ENCODE measurements at regions of chr17 and their contacts with region 1.

Region 1: DNA sequence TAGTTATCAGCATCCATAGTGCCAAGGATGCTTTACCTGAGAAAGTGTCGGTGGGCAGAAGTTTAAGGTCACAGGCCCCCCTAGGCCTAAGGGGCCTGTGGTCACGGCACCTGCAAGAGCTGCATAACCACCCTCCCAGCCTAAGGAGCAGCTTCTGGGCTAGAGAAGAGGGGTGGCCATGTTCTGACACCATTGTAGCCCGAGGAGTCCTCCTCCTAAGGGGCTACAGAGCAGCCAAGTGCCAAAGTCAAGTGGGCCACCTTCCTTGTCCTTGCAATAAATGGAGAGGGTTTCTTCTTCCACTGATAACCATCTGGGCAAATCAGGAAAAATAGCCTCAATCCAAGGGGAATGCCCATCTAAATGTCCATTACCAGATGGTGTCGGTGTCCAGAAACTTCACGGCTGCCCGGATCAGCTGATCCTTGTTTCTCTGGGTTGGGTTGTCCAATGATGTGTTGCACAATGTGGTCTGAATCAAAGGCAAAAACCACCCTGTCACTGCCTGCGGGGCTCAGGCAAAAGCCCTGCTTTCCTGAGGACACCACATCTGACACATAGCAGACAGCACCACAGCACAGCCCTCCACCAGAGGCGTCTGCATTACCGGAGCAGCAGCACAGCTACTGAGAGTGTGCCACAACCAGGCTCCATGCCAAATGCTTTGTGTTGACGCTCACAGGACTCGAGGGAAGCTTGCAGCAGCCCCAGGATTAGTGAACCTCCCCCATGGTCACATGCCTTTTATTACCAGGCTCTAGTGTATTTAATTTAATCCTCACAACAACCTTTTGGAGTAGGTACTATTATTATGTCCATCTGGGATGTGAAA is 12.8 kb downstream of the ATPAF2 start:
- DNase-seq: no peak
- ATAC-seq: no peak
- H3K4me3 ChIP-seq: no peak overlapping the region
- H3K27ac ChIP-seq: no peak overlapping the region
- H3K4me1 ChIP-seq: no peaks in the 10 kb centered on the region
- H3K27me3 ChIP-seq: no peaks in the 10 kb centered on the region
- CTCF ChIP-seq: no peak
- EP300 ChIP-seq: no peak
- POLR2A ChIP-seq: no peak
- RAD21 ChIP-seq: no peak

Region 2: GRCh38 chr17:17983376-17983775 is 42.8 kb before region 1 on chr17:
- CTCF ChIA-PET with region 1: no interaction called
- POLR2A ChIA-PET with region 1: no interaction called
- in situ Hi-C with region 1: no loop called
- intact Hi-C with region 1: no loop called
- DNase-seq: no peak
- ATAC-seq: peak; percentile 67
- H3K4me3 ChIP-seq: peak overlapping the region in 1 of 3 experiments; percentile 30; a peak in 1 of 6 replicates
- H3K27ac ChIP-seq: no peak overlapping the region
- H3K4me1 ChIP-seq: peaks cover 17% of the 10 kb centered on the region
- H3K27me3 ChIP-seq: peaks cover 0 to 14% of the 10 kb centered on the region in 2 experiments; a peak in 3 of 5 replicates
- CTCF ChIP-seq: no peak
- EP300 ChIP-seq: no peak
- POLR2A ChIP-seq: no peak
- RAD21 ChIP-seq: no peak

Region 3: GRCh38 chr17:17994271-17995069 is 31.7 kb before region 1 on chr17:
- CTCF ChIA-PET with region 1: no interaction called
- POLR2A ChIA-PET with region 1: no interaction called
- in situ Hi-C with region 1: loop called (anchors 5 kb)
- intact Hi-C with region 1: no loop called
- DNase-seq: peak; percentile 56
- ATAC-seq: peak; percentile 89
- H3K4me3 ChIP-seq: peak overlapping the region in 1 of 3 experiments; percentile 18; a peak in 1 of 6 replicates
- H3K27ac ChIP-seq: no peak overlapping the region
- H3K4me1 ChIP-seq: peaks cover 29% of the 10 kb centered on the region
- H3K27me3 ChIP-seq: peaks cover 0 to 22% of the 10 kb centered on the region in 2 experiments; a peak in 3 of 5 replicates
- CTCF ChIP-seq: peak; percentile 81
- EP300 ChIP-seq: no peak
- POLR2A ChIP-seq: no peak
- RAD21 ChIP-seq: peak; percentile 66

Measured in HepG2 (cell line).